MCF 10A (cell line): ENCODE measurements at regions of chr3 and their contacts with region 1.

Region 1: GRCh38 chr3:197554562-197555280 is 1.0 kb downstream of the BDH1 start:
- DNase-seq: peak; percentile 96
- H3K4me3 Mint-ChIP-seq: peak overlapping the region; percentile 85
- H3K27ac Mint-ChIP-seq: peak overlapping the region; percentile 81
- H3K4me1 Mint-ChIP-seq: peaks cover 22% of the 10 kb centered on the region
- H3K27me3 Mint-ChIP-seq: peaks cover 11% of the 10 kb centered on the region
- CTCF ChIP-seq: peak; percentile 49

Region 2: GRCh38 chr3:197516517-197516889 is 38.2 kb before region 1 on chr3:
- CTCF ChIA-PET with region 1: no interaction called
- POLR2A ChIA-PET with region 1: interaction called, 4 read pairs
- intact Hi-C with region 1: loop called (anchors 2 kb)
- DNase-seq: peak; percentile 97
- H3K4me3 Mint-ChIP-seq: peak overlapping the region; percentile 18
- H3K27ac Mint-ChIP-seq: peak overlapping the region; percentile 67
- H3K4me1 Mint-ChIP-seq: peaks cover 23% of the 10 kb centered on the region
- H3K27me3 Mint-ChIP-seq: no peaks in the 10 kb centered on the region
- CTCF ChIP-seq: no peak

Region 3: GRCh38 chr3:197533927-197534340 is 20.8 kb before region 1 on chr3:
- CTCF ChIA-PET with region 1: interaction called, 4 read pairs
- POLR2A ChIA-PET with region 1: interaction called, 34 read pairs
- intact Hi-C with region 1: loop called (anchors 1 kb)
- DNase-seq: peak; percentile 83
- H3K4me3 Mint-ChIP-seq: peak overlapping the region; percentile 61
- H3K27ac Mint-ChIP-seq: peak overlapping the region; percentile 84
- H3K4me1 Mint-ChIP-seq: peaks cover 19% of the 10 kb centered on the region
- H3K27me3 Mint-ChIP-seq: no peaks in the 10 kb centered on the region
- CTCF ChIP-seq: no peak